Gastrocnemius medialis (tissue), 4 donors: ENCODE measurements at regions of chr9 and their contacts with region 1.

Region 1: DNA sequence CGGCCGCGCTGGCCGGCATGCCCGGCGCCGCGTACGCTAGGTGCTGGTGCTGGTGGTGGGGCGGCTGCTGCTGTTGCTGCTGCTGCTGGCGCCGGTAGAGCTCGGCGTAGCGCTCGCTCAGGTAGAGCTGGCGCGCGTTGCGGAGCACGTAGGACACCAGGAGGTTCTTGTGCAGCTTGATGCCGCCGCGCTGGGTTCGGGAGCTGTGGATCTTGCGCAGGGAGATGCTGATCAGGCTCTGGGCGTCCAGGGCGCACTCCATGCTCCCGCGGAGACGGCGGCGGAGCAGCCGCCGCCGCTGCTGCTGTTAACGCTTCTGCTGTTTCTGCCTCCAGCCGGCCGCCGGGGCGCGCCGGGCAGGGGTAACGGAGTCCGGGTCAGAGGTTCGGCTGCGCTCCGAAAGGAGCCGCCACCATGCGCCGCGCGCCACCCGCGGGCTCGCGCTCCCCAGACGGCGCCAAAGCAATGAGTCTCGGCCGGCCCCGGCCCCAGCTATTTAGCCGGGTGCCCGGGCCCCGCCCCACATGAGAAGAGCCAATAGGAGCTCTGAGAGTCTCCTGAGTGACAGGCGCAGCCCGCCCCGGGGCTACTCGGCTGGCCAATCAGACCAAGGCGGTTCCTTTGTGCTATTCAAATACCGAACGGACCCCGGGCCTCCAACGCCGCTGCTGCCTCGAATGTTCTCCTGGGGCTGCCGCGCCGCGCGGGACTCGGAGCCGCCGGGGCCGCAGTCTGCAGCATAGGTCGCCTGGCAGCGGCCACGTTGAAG is at the start of gene IER5L:
- DNase-seq: peak; percentile 93
- ATAC-seq: peak; percentile 79 to 81
- H3K4me3 ChIP-seq: peak within 1 kb of the TSS; percentile 64 to 86 (median 74)
- H3K27ac ChIP-seq: peak within 1 kb of the TSS; percentile 85 to 93 (median 87)
- H3K4me1 ChIP-seq: peaks cover 9 to 24% of the 10 kb centered on the region in 2 donors
- H3K27me3 ChIP-seq: peaks cover 0 to 5% (median 5%) of the 10 kb centered on the region in 3 donors
- CTCF ChIP-seq: peak in 1 of 5 experiments; percentile 6
- POLR2A ChIP-seq: peak; percentile 83 to 97
- total RNA-seq, gene IER5L: 0.92 to 3.4 (median 2.9) TPM

Region 2: DNA sequence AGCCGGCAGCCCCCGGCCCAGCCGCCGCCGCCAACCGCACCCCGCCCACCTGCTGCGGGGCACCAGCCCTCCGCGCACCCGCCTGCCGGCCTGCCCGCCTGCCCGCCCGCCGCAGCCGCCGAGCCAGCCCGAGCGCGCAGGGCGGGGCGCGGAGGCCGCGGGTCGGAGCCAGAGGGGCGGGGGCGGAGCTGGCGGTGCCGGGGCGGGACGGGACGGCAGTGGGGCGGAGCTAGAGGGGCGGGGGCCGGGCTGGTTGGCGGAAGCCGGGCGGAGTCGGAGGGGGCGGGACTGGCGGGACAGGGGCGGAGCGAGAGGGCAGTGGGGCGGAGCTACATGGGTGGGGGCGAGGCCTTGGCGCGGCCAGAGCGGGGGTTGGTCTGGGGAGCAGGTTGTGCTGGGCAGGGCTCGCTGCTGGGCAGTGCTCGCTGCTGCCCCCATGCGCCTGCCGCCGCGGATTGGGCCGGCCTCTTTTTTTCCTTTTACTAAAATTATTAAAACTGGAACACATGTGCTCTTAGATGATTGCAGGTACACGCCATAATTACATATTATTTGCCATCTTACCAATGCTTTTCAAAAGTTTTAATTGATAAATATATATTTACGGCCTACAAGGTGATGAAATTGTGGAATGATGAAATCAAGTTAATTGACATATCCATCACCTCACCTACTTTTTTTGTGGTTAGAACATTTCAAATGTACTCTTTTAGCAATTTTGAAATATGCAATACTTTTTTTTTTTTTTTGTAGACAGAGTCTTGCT is 149.6 kb before region 1 on chr9 and contains the start of gene SH3GLB2:
- in situ Hi-C with region 1: no loop called
- intact Hi-C with region 1: no loop called
- DNase-seq: peak; percentile 93 to 95
- ATAC-seq: peak; percentile 68 to 72
- H3K4me3 ChIP-seq: peak within 1 kb of the TSS; percentile 64 to 81 (median 74)
- H3K27ac ChIP-seq: peak within 1 kb of the TSS; percentile 81 to 90 (median 86)
- H3K4me1 ChIP-seq: peaks cover 24% of the 10 kb centered on the region in 2 donors
- H3K27me3 ChIP-seq: no peaks in the 10 kb centered on the region
- CTCF ChIP-seq: peak; percentile 78 to 95 (median 85)
- POLR2A ChIP-seq: peak; percentile 56 to 78
- total RNA-seq, gene SH3GLB2: 33.6 to 55.1 (median 44.1) TPM

Region 3: GRCh38 chr9:129202613-129203555 is 24.9 kb after region 1 on chr9:
- in situ Hi-C with region 1: no loop called
- intact Hi-C with region 1: loop called (anchors 2 kb)
- DNase-seq: peak; percentile 61 to 75
- ATAC-seq: peak; percentile 88 to 94
- H3K4me3 ChIP-seq: peak overlapping the region; percentile 61 to 93 (median 76)
- H3K27ac ChIP-seq: peak overlapping the region; percentile 92 to 97 (median 94)
- H3K4me1 ChIP-seq: peaks cover 0 to 3% of the 10 kb centered on the region in 2 donors
- H3K27me3 ChIP-seq: peaks cover 0 to 8% (median 7%) of the 10 kb centered on the region in 3 donors
- CTCF ChIP-seq: no peak
- POLR2A ChIP-seq: peak; percentile 49 to 58

Region 4: GRCh38 chr9:129320575-129321263 is 142.7 kb after region 1 on chr9:
- in situ Hi-C with region 1: no loop called
- intact Hi-C with region 1: loop called (anchors 5 kb)
- DNase-seq: peak in 1 of 2 donors; percentile 47
- ATAC-seq: peak; percentile 77 to 88
- H3K4me3 ChIP-seq: peak overlapping the region; percentile 39 to 62 (median 48)
- H3K27ac ChIP-seq: peak overlapping the region; percentile 60 to 84 (median 75)
- H3K4me1 ChIP-seq: peaks cover 41 to 45% of the 10 kb centered on the region in 2 donors
- H3K27me3 ChIP-seq: no peaks in the 10 kb centered on the region
- CTCF ChIP-seq: no peak
- POLR2A ChIP-seq: peak; percentile 41 to 62

Region 5: GRCh38 chr9:129413537-129414376 is 235.8 kb after region 1 on chr9:
- in situ Hi-C with region 1: no loop called
- intact Hi-C with region 1: loop called (anchors 5 kb)
- DNase-seq: peak; percentile 98 to 99
- ATAC-seq: peak; percentile 83 to 88
- H3K4me3 ChIP-seq: peak overlapping the region; percentile 60 to 85 (median 75)
- H3K27ac ChIP-seq: peak overlapping the region; percentile 85 to 100 (median 98)
- H3K4me1 ChIP-seq: peaks cover 10 to 23% of the 10 kb centered on the region in 2 donors
- H3K27me3 ChIP-seq: no peaks in the 10 kb centered on the region
- CTCF ChIP-seq: peak in 1 of 5 experiments; percentile 22
- POLR2A ChIP-seq: peak; percentile 94 to 99

Region 6: DNA sequence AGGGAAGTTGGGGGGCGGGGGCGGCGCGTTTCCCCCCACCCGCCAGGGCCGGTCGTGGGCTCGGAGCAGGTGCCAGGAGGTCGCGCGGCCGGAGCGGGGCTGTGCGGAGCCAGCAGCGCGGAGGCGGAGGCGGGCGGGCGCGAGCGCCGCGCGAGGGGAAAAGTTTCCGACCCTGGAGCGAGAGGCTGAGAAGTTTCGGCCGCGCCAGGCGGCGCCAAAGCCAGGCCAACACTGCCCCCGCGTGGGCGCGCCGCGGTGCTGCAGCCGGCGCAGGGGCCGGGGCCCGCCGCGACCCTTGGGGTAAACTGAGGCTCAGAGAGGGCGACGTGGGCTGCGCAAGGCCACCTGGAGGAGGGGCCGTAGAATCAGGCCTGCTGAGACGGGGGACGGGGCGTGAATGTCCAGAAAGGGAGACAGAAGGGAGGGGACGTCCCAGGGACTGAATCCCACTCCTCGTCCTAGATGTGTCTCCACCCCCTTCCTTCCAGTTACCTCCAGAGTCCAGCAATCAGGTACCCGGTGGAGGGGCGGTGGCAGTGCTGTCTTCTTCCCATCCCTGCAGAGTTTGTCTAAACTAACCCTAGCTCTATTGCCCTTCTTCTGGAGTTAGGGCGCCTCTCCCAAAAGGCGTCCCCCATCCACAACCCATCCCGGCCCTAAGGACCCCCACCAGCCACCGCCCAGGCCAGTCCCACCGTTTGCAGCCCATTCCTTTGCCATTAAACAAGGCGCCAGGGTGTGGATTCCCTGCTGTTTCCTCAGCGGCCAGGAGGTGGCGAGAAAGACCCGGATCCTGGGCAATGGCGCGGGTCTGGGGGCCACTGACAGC is 432.7 kb after region 1 on chr9:
- in situ Hi-C with region 1: no loop called
- intact Hi-C with region 1: loop called (anchors 1 kb)
- DNase-seq: peak; percentile 45 to 60
- ATAC-seq: peak; percentile 72 to 80
- H3K4me3 ChIP-seq: peak overlapping the region; percentile 60 to 95 (median 72)
- H3K27ac ChIP-seq: peak overlapping the region; percentile 77 to 86 (median 82)
- H3K4me1 ChIP-seq: peaks cover 13 to 22% of the 10 kb centered on the region in 2 donors
- H3K27me3 ChIP-seq: no peaks in the 10 kb centered on the region
- CTCF ChIP-seq: peak; percentile 65 to 100 (median 99)
- POLR2A ChIP-seq: no peak